Sigmoid colon (tissue), 7 donors: ENCODE measurements at regions of chr12 and their contacts with region 1.

Region 1: GRCh38 chr12:92145731-92146496 is at the start of gene BTG1:
- DNase-seq: peak; percentile 100
- H3K4me3 ChIP-seq: peak within 1 kb of the TSS; percentile 90 to 99 (median 96)
- H3K27ac ChIP-seq: peak within 1 kb of the TSS; percentile 98 to 99 (median 99)
- H3K4me1 ChIP-seq: peaks cover 0 to 13% (median 4%) of the 10 kb centered on the region in 4 donors
- H3K27me3 ChIP-seq: no peaks in the 10 kb centered on the region
- CTCF ChIP-seq: no peak
- EP300 ChIP-seq: peak in 1 of 4 donors; percentile 33
- POLR2A ChIP-seq: peak; percentile 97 to 99
- total RNA-seq, gene BTG1: 41.0 to 62.9 (median 49.5) TPM

Region 2: DNA sequence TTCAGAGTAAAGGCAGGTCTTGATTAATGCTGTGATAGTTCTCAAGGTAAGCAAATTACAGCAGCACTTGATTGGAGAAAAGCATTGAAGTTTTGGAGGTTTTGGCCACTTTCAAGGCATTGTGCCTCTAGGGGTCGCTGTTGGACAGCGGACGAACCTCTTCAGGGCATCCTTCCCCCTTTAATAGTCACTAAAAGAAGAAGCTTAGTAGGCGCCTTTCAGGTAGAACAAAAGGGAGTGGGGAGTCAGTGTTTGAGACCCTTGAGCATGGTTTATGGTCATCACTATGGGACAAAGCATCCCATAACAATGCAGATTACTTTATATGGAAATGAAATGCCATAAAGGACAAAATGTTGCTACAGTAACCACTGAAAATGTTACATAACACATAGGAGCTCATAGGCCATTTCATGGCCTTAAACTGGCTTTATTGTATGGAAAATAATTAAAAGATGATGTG is 763.8 kb before region 1 on chr12:
- intact Hi-C with region 1: loop called (anchors 2 kb)
- DNase-seq: peak; percentile 88
- H3K4me3 ChIP-seq: peak overlapping the region; percentile 38 to 50 (median 44)
- H3K27ac ChIP-seq: peak overlapping the region; percentile 49 to 78 (median 62)
- H3K4me1 ChIP-seq: peaks cover 0 to 12% (median 8%) of the 10 kb centered on the region in 4 donors
- H3K27me3 ChIP-seq: no peaks in the 10 kb centered on the region
- CTCF ChIP-seq: peak; percentile 53 to 90 (median 78)
- EP300 ChIP-seq: no peak
- POLR2A ChIP-seq: no peak

Region 3: DNA sequence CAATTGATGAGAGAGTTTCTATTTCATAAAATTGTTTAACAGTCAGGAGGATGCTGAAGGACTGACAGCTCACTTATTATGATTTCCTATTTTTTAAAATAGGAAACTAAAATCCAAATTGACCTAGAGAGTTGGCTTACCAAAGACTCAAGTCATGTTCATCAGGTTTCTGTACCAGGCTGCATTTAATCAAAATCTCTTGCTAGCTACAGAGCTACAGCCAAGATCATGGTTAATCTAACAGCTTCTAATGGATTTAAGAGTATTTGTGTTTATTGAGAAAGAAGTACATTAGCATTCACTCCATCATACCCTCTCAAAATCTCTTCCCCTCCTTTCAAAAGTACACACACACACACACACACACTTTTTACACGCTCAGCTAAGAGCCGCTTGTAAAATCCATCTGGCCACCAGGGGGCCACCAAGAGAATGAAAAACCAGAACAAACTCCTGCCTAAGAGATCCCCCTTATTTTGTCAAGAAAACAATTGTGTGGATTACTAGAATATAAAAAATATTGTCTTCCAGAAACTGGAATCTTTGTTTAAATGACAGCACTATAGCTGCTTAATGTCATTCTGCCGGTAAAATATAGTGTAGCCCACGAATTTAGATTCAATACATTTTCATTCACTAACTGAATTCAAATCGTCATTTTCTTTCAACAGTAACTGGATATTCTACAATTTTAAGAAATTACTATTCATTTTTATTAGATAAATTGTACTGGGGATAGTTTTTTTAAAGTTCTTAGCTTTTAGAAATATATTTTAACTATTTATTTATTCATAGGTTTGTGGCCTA is 334.2 kb before region 1 on chr12:
- intact Hi-C with region 1: loop called (anchors 2 kb)
- DNase-seq: peak; percentile 80
- H3K4me3 ChIP-seq: no peak overlapping the region
- H3K27ac ChIP-seq: no peak overlapping the region
- H3K4me1 ChIP-seq: no peaks in the 10 kb centered on the region
- H3K27me3 ChIP-seq: no peaks in the 10 kb centered on the region
- CTCF ChIP-seq: peak; percentile 64 to 93 (median 80)
- EP300 ChIP-seq: no peak
- POLR2A ChIP-seq: no peak

Region 4: GRCh38 chr12:92049403-92049802 is 96.5 kb before region 1 on chr12:
- intact Hi-C with region 1: no loop called
- DNase-seq: no peak
- H3K4me3 ChIP-seq: no peak overlapping the region
- H3K27ac ChIP-seq: no peak overlapping the region
- H3K4me1 ChIP-seq: no peaks in the 10 kb centered on the region
- H3K27me3 ChIP-seq: no peaks in the 10 kb centered on the region
- CTCF ChIP-seq: no peak
- EP300 ChIP-seq: no peak
- POLR2A ChIP-seq: no peak

Region 5: DNA sequence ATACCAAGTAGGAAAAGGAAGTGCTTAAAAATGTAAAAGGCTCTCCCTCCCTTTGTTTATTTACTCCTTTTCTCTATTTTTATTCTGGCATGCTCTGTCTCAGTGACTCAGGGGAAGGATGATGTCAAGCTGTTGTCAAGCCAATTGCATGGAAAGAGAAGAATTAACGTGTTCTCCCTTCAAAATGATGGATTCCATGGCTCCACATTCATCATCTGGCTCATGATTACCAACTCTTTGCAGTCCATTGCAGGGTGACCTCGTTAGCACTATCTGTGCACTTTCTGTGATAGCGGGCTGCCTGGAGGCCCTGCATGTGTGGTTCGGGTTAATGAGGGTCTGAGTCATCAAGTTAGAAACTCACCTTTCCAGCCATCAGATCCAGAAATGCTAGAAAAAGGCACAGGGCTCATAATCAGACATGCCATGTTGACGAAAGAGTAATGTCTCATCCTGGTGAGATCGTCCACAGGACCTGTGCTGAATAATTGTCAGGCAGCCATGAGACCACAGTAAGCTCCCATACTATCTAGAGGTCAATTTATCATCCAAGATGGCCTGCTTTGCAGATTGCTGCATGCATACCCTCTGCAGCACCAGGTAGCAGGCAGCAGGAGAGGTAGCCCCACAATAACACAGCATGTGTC is 78.9 kb after region 1 on chr12:
- intact Hi-C with region 1: loop called (anchors 5 kb)
- DNase-seq: no peak
- H3K4me3 ChIP-seq: no peak overlapping the region
- H3K27ac ChIP-seq: no peak overlapping the region
- H3K4me1 ChIP-seq: peaks cover 0 to 22% (median 11%) of the 10 kb centered on the region in 4 donors
- H3K27me3 ChIP-seq: no peaks in the 10 kb centered on the region
- CTCF ChIP-seq: no peak
- EP300 ChIP-seq: no peak
- POLR2A ChIP-seq: no peak

Region 6: DNA sequence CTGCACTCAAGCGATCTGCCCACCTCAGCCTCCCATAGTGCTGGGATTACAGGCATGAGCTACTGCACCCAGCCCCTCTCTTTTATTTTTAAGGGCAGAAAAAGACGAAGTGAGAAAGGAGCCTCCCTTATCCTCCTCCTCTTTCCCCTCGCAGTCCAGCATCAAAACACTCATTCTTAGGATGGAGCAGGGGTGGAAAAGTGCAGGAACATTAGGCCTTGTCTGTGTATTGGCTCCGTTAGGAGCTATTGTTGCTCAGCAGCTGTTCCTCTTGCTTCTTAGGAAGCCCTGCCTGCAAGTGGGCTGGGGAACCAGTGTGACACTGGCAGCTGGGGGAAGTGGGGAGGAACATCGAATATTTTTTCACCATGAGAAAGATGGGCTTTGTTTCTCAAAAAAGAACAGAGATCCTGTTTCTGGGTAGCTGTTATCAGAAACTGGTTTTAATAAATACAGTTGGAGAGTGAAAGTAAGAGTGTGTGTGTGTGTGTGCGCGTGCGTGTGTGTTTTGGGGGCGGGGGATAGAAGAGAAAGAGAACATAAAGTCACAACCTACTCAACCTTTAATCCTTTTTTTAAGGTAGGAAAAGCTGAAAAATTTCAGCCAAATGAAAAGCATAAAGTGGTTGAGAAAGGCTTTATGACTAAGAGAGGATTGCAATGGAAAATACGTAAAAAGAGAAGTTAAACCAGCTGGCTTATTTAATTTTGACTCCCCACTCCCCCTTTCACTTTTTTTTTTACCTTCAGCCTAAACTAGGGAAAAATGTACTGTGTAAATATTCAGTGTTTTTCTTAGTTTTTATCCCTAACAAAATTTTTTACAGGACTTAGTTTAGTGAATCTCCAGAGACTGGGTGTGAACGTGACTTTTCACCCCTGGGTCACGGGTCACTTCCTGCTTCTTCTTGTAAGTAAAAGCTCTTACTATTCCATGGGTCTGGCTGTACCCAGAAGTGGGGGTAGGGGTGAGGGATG is 359.6 kb after region 1 on chr12:
- intact Hi-C with region 1: loop called (anchors 10 kb)
- DNase-seq: peak; percentile 89
- H3K4me3 ChIP-seq: peak overlapping the region in 1 of 4 donors; percentile 20
- H3K27ac ChIP-seq: peak overlapping the region; percentile 71 to 81 (median 78)
- H3K4me1 ChIP-seq: peaks cover 0 to 49% (median 42%) of the 10 kb centered on the region in 4 donors
- H3K27me3 ChIP-seq: no peaks in the 10 kb centered on the region
- CTCF ChIP-seq: no peak
- EP300 ChIP-seq: no peak
- POLR2A ChIP-seq: no peak